GM13977 (cell line): ENCODE measurements at regions of chrX and their contacts with region 1.

Region 1: GRCh38 chrX:85569686-85570085 is 190.2 kb upstream of the POF1B start:
- DNase-seq: no peak
- CTCF ChIP-seq: no peak

Region 2: DNA sequence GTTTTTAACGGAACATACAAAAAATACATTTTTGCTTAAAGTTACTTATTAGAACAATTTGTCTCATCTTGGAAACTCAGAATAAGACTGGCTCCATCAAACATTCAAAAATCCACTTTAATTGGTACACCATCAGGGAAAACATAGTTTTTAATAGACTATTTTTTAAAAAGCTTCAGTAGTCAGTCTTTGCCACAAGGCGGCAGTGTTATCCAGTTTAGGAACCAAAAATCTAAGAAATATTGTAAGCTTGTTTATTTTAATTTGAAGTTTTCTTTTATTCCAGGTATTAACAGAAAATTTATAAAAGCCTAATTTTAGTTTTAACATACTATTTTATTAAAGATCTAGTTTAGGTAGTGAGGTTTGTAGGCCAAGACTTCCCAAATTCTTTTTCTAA is 458.3 kb before region 1 on chrX:
- in situ Hi-C with region 1: loop called (anchors 25 kb)
- DNase-seq: no peak
- CTCF ChIP-seq: peak; percentile 68